Dendritic cell treated with granulocyte-macrophage colony-stimulating factor and Interleukin-4, amounts not matched to agents 40 ng/mL and 50 ng/mL, for 4 days (primary cell): ENCODE measurements at regions of chr17 and their contacts with region 1.

Region 1: DNA sequence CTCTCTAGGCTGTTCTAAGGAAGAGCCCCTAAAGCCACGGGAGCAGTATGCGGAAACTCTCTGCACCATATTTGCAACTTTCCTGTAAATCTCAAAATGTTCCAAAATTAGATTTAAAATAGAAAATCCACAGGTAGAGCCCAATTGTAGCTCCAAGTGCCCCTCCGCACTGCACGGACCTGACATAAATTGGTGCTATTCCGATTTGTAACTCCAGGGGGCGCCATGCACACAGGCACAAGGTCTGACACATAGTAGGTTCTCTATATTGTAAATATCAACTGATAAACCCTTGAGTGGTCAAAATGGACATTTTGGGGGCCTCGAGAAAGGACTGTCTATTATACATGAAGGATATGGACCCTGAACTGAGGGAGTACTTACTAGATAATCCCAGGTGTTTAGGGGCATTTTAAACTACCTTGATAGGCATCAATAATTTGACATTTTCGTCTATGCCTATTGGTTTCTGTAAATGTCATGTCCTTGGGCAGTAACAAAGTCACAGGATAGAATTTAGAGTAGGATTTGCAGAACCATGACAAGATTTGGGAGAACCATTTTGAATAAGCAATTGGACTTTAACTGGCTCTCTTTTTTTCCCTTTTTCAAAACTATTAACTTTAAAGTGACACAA is 36.6 kb upstream of the TMEM132E start:
- H3K4me3 Mint-ChIP-seq: no peak overlapping the region
- H3K27ac Mint-ChIP-seq: no peak overlapping the region
- H3K4me1 Mint-ChIP-seq: no peaks in the 10 kb centered on the region
- H3K27me3 Mint-ChIP-seq: peaks cover 34% of the 10 kb centered on the region

Region 2: GRCh38 chr17:34637548-34638525 is 95.0 kb after region 1 on chr17:
- intact Hi-C with region 1: loop called (anchors 2 kb)
- H3K4me3 Mint-ChIP-seq: peak overlapping the region; percentile 32
- H3K27ac Mint-ChIP-seq: no peak overlapping the region
- H3K4me1 Mint-ChIP-seq: no peaks in the 10 kb centered on the region
- H3K27me3 Mint-ChIP-seq: peaks cover 64% of the 10 kb centered on the region

Region 3: GRCh38 chr17:35119368-35120165 is 576.7 kb after region 1 on chr17 and contains the start of gene RAD51D:
- intact Hi-C with region 1: loop called (anchors 2 kb)
- H3K4me3 Mint-ChIP-seq: peak within 1 kb of the TSS; percentile 85
- H3K27ac Mint-ChIP-seq: peak within 1 kb of the TSS; percentile 86
- H3K4me1 Mint-ChIP-seq: peaks cover 26% of the 10 kb centered on the region
- H3K27me3 Mint-ChIP-seq: peaks cover 4% of the 10 kb centered on the region